Activated T-helper 1 cell treated with anti-CD3 and anti-CD28 coated beads, Interleukin-12 subunit alpha, Interleukin-12 subunit beta, Interleukin-2, Interleukin-4 antibody, amounts not matched to agents 30 ng/mL and 10 ng/mL and 1 ng/mL, durations not matched to agents 14 hours and 24 hours and 36 hours (primary cell): ENCODE measurements at regions of chr6 and their contacts with region 1.

Region 1: GRCh38 chr6:14734416-14735340 is 511.2 kb upstream of the JARID2 start:
- DNase-seq: peak; percentile 58
- H3K4me3 Mint-ChIP-seq: peak overlapping the region; percentile 36
- H3K27ac Mint-ChIP-seq: peak overlapping the region; percentile 94
- H3K4me1 Mint-ChIP-seq: peaks cover 91% of the 10 kb centered on the region
- H3K27me3 Mint-ChIP-seq: no peaks in the 10 kb centered on the region

Region 2: DNA sequence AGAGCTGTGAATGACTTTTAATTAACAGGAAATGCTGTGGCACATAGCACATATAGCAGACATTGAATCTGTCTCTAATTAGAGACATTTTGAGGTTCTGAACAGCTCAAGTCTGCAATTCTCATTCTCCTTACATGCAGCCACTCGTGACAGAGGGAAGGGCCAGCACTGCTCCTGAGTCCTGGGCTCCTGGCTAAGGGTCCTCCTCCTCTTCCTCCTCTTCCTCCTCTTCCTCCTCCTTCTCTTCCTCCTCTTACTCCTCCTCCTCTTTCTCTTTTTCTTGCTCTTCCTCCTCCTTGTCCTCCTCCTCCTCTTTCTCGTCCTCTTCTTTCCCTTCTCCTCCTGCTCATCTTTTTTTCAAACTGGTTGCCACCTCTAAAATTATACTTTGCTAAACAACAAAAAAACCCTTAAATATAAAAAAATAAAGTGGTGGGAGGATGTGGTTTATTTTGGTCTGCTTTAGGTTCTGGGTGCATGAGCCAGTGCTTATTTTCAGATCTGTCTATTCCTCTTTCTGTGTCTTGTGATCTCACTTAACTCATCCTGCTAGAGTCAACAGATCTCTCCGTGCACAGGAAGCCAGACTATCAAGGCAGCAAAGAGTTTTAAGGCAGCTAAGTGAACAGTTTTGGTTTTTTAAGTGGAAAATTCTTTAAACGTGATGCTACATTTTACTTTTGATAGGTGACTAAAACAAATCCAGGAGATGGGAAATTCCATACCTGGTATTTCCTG is 457.8 kb before region 1 on chr6:
- intact Hi-C with region 1: loop called (anchors 5 kb)
- DNase-seq: peak; percentile 31
- H3K4me3 Mint-ChIP-seq: peak overlapping the region; percentile 24
- H3K27ac Mint-ChIP-seq: peak overlapping the region; percentile 72
- H3K4me1 Mint-ChIP-seq: peaks cover 33% of the 10 kb centered on the region
- H3K27me3 Mint-ChIP-seq: no peaks in the 10 kb centered on the region

Region 3: GRCh38 chr6:14488180-14488579 is 246.5 kb before region 1 on chr6:
- intact Hi-C with region 1: no loop called
- DNase-seq: no peak
- H3K4me3 Mint-ChIP-seq: no peak overlapping the region
- H3K27ac Mint-ChIP-seq: no peak overlapping the region
- H3K4me1 Mint-ChIP-seq: no peaks in the 10 kb centered on the region
- H3K27me3 Mint-ChIP-seq: no peaks in the 10 kb centered on the region

Region 4: GRCh38 chr6:14530385-14530784 is 204.3 kb before region 1 on chr6:
- intact Hi-C with region 1: no loop called
- DNase-seq: no peak
- H3K4me3 Mint-ChIP-seq: no peak overlapping the region
- H3K27ac Mint-ChIP-seq: no peak overlapping the region
- H3K4me1 Mint-ChIP-seq: peaks cover 5% of the 10 kb centered on the region
- H3K27me3 Mint-ChIP-seq: peaks cover 2% of the 10 kb centered on the region

Region 5: DNA sequence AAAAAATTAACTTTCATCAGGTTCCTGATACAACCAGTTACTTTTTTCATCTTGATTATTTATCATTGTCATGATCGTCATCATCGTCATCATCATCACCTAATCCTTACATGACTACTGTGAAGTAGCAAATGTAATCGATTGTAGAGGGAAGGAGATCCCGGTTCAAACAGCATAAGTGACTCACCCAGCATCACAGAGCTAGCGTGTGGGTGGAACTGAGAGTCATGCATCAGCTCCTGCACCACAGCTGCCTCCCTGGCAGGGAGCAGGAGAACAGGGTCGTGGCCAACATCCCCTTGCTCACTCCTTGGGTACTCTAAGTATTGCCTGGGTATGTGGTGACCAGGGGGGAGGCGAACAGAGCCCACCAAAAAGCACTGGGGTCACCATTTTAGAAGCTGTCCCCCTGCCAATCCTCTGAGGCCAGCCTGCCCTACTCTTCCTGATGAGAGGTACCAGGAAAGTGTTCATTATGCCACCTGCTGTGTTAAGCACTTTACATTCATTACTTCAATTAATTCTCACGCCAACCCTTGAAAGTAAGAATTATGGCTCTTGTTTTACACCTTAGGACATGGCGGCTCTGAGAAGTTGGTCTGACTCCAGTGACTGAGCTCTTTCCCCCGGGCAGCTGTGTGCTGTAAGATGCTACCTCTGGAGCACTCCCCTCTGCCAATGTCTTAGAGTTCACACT is 191.9 kb before region 1 on chr6:
- intact Hi-C with region 1: loop called (anchors 1 kb)
- DNase-seq: peak; percentile 10
- H3K4me3 Mint-ChIP-seq: no peak overlapping the region
- H3K27ac Mint-ChIP-seq: peak overlapping the region; percentile 64
- H3K4me1 Mint-ChIP-seq: peaks cover 26% of the 10 kb centered on the region
- H3K27me3 Mint-ChIP-seq: peaks cover 1% of the 10 kb centered on the region

Region 6: DNA sequence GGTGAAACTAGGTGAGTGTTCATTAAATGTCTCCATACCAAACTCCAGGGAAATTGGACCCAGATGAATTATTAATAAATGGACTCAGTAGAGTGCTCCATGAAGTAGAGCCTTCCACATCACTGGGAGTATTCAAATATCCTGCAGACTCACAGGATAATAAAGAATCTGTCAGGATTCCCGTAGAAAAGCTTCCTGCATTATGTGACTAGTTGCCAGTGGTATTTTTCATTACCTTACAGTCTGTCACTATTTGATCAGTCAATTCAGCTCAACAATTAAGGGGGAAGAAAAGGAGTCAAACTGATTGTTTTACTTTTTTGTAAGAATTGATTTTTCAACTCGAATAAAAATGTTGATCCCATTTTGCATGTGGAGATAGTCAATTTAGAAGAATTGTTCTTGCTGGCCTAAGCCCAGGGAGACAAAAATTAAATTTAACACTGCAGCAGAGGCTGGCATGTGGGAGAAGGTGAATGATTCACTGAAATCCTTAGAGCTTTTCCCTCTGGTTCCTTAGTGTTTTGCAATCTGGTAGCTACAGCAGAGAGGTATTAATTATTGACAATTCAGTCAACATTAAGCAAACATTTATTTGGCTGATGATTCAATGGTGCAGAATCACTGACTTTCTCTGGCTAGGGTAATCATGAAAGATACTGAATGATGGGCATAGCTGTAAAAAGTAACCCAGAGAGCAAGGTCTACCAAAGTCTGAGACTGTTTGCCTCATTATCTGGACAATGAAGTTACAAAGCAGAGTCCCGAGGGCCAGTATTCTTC is 174.7 kb before region 1 on chr6:
- intact Hi-C with region 1: no loop called
- DNase-seq: no peak
- H3K4me3 Mint-ChIP-seq: no peak overlapping the region
- H3K27ac Mint-ChIP-seq: no peak overlapping the region
- H3K4me1 Mint-ChIP-seq: no peaks in the 10 kb centered on the region
- H3K27me3 Mint-ChIP-seq: peaks cover 2% of the 10 kb centered on the region

Region 7: GRCh38 chr6:14816116-14816859 is 81.6 kb after region 1 on chr6:
- intact Hi-C with region 1: loop called (anchors 2 kb)
- DNase-seq: no peak
- H3K4me3 Mint-ChIP-seq: no peak overlapping the region
- H3K27ac Mint-ChIP-seq: no peak overlapping the region
- H3K4me1 Mint-ChIP-seq: peaks cover 22% of the 10 kb centered on the region
- H3K27me3 Mint-ChIP-seq: peaks cover 3% of the 10 kb centered on the region

Region 8: DNA sequence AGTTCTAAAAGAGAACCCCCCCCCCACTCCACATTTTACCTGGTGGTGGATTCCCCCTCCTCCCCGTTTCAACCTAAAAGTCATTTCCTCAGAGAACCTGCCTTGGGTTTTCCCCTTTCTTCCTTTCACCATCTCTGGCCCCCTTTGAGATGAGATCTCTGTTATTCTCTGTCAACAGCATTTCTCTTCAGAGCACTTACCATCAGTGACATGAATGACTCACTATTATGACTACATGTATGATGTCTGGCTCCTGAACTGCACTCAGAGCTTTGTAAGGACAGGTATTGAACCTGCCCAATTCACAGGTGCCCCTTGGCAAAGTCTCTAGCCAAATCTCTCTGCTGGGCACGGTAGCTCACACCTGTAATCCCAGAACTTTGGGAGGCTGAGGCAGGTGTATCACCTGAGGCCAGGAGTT is 449.8 kb after region 1 on chr6:
- intact Hi-C with region 1: loop called (anchors 1 kb)
- DNase-seq: peak; percentile 25
- H3K4me3 Mint-ChIP-seq: no peak overlapping the region
- H3K27ac Mint-ChIP-seq: peak overlapping the region; percentile 94
- H3K4me1 Mint-ChIP-seq: peaks cover 16% of the 10 kb centered on the region
- H3K27me3 Mint-ChIP-seq: no peaks in the 10 kb centered on the region

Region 9: DNA sequence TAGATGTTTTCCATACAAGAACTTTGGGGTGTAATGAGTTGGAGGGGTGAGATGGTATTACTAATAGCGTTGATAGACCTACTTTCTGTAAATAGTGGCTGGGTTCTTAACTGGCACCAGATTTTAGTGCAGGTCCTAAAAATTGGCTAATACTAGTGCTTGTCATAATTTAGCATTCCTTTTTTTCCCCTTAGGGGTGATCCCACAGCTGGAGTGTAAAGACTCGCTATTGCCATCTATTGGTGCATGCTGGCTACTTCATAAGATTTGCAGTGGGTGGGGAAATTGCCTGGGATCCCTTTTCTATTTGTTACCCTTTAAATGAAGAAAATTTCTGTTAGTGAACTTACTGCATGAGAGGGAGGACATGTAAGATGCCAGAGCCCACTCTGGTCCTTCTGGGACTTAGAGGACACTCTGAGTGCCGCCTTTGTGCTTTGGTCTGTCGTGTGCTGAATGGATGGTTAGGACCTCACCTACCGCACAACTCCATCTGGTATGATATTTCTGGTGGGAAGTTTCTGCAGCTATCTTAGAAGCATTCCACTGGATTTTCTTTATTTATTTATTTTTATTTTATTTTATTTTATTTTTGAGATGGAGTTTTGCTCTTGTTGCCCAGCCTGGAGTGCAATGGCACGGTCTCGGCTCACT is 706.7 kb after region 1 on chr6:
- intact Hi-C with region 1: loop called (anchors 5 kb)
- DNase-seq: no peak
- H3K4me3 Mint-ChIP-seq: no peak overlapping the region
- H3K27ac Mint-ChIP-seq: no peak overlapping the region
- H3K4me1 Mint-ChIP-seq: peaks cover 83% of the 10 kb centered on the region
- H3K27me3 Mint-ChIP-seq: no peaks in the 10 kb centered on the region